HEK293T (cell line): ENCODE measurements at regions of chr17 and their contacts with region 1.

Region 1: GRCh38 chr17:41548844-41549595 is 20.9 kb upstream of the KRT19 start:
- DNase-seq: peak; percentile 86

Region 2: DNA sequence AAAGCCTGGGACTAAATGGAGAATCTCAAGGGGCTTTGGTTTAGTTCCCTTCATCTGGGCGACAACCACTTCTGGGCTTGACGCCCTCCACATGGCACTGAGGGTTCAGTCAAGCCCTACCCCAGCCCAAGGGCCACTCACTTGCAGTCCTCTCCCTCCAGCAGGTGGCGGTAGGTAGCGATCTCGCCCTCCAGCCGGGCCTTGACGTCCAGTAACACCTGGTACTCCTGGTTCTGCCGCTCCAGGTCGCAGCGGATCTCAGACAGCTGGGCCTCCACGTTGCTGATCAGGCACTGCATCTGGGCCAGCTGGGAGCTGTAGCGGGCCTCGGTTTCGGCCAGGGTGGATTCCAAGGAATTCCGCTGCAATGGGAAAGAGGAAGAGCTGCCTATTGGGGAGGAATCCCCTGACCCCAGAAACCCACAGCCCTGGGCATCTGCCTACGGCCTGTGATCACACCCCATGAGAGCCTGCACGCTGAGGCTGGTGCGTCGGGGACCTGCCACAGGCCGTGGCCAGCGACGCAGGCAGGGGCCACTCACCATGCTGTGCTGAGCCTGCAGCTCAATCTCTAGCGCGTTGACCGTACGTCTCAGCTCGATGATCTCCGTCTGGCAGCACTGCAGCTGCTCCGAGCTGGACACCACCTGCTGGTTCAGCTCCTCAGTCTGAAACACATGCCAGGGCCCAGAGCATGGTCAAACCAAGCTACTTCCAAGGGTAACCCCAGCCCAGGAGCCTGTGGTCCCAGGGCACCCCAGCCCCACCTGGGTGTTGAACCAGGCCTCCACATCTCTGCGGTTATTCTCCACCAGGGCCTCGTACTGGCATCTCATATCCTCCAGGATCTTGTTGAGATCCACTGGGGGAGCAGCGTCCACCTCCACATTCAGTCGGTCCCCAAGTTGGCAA is 62.0 kb before region 1 on chr17:
- CTCF ChIA-PET with region 1: interaction called, 21 read pairs
- POLR2A ChIA-PET with region 1: no interaction called
- DNase-seq: peak; percentile 54

Region 3: GRCh38 chr17:41538565-41538991 is 10.4 kb before region 1 on chr17:
- CTCF ChIA-PET with region 1: interaction called, 36 read pairs
- POLR2A ChIA-PET with region 1: no interaction called
- DNase-seq: no peak

Region 4: GRCh38 chr17:41567317-41567716 is 18.3 kb after region 1 on chr17:
- CTCF ChIA-PET with region 1: interaction called, 35 read pairs
- POLR2A ChIA-PET with region 1: interaction called, 3 read pairs
- DNase-seq: no peak

Region 5: DNA sequence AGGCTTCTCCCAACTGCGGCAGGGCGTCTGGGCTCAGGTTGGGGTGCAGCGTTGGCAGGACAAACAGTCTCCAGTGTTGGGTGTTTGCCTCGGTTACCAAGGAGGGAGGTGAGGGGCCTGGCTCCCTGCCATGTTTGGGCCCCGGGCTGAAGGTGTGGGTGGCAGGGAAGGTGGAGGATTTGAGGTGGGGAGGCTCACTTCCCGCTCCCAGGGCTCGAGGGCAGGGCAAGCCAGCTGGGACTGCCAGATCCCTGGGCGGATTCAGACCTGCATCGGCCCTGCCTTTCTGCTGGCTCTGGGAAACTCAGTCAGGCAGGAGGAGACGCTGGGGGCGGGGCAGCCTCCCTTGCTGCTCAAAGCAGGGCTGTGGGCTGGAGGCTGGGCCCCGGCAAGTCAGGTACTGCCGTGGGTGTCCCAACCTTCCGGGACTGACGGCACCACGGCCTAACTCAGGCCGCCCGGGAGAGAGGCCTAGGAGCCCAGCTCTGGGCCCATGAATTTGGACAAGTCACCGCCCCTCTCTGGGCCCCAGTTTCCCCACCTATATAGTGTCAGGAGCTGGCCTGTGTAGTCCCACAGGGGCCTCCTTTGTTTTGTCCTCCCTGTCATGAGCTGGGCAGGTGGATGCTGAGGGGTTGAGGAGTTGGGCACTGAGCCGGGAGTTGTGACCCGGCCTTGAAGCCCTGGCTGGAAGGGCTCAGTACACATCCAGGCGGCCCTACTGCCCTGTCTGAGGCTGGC is 106.8 kb after region 1 on chr17:
- CTCF ChIA-PET with region 1: interaction called, 83 read pairs
- POLR2A ChIA-PET with region 1: interaction called, 4 read pairs
- DNase-seq: no peak

Region 6: GRCh38 chr17:41710468-41711090 is 161.6 kb after region 1 on chr17:
- CTCF ChIA-PET with region 1: no interaction called
- POLR2A ChIA-PET with region 1: no interaction called
- DNase-seq: no peak